ENCODE measurements at regions of chr2 and their contacts with region 1.

Region 1: DNA sequence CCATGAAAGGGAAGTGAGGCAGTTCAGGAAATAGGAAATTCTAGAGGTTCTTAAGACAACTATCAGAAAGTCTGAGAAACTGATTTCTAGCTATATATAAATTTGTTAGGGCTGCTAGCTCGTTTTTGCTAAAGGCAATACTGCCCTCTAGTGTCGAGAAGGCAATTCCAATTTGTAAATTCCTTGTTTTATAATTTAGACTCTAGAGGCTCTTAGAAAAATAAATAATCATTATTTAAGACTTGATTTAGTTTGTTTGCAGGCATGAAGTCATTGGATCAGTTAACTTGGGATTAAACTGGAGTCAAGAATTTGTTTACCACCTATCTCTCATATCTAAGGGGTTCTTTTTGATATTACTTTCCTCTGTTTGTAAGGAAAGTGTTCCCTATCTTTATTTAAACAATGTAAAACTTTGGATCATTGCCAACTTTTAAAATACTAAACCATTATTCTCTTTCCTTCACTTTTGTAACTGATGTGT is 66.2 kb downstream of the ACVR2A start:
- DNase-seq: peak; percentile 11 to 68 (median 14)
- ATAC-seq: peak; percentile 63; the same call in 2 of the 3 replicates
- H3K4me3 ChIP-seq: no peak overlapping the region
- H3K27ac ChIP-seq: no peak overlapping the region
- H3K4me1 ChIP-seq: no peaks in the 10 kb centered on the region
- H3K27me3 ChIP-seq: no peaks in the 10 kb centered on the region
- CTCF ChIP-seq: peak; percentile 44 to 83 (median 53); a peak in 4 of 6 replicates
- EP300 ChIP-seq: no peak
- POLR2A ChIP-seq: no peak
- RAD21 ChIP-seq: peak; percentile 87

Region 2: DNA sequence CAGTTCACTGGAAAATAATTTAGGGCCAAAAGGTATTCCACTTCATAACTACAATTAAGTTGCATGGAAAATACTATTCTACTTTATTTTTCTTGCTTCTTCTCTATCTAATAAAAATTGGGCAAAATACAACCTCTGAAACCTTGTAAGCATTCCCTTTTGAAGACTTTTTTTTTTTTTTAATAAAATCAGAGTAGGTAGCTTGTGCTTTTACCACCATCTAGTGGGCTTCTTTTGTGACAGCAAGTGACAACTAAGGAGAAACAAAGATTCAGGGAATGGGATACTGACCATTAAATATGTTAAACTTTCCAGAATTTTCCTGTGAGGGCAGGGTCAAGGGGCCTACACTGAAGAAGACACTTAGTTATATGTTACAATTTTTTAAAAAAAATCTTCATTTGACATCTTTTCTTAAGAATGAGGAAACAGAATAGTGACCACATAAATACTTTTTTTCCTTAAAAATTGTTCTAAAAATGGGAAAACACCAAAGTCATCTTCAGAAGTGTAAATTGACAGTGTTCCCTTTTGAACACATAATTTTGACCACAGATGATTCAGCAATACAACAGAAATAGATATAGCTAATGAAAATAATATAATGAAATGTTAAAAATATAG is 1249.4 kb before region 1 on chr2:
- CTCF ChIA-PET with region 1: no interaction called
- POLR2A ChIA-PET with region 1: no interaction called
- in situ Hi-C with region 1: no loop called
- intact Hi-C with region 1: loop called (anchors 5 kb)
- DNase-seq: peak; percentile 6 to 29 (median 6)
- ATAC-seq: no peak
- H3K4me3 ChIP-seq: no peak overlapping the region
- H3K27ac ChIP-seq: no peak overlapping the region
- H3K4me1 ChIP-seq: no peaks in the 10 kb centered on the region
- H3K27me3 ChIP-seq: no peaks in the 10 kb centered on the region
- CTCF ChIP-seq: peak; percentile 7 to 53 (median 32); a peak in 3 of 6 replicates
- EP300 ChIP-seq: no peak
- POLR2A ChIP-seq: no peak
- RAD21 ChIP-seq: peak; percentile 57 to 59

Region 3: DNA sequence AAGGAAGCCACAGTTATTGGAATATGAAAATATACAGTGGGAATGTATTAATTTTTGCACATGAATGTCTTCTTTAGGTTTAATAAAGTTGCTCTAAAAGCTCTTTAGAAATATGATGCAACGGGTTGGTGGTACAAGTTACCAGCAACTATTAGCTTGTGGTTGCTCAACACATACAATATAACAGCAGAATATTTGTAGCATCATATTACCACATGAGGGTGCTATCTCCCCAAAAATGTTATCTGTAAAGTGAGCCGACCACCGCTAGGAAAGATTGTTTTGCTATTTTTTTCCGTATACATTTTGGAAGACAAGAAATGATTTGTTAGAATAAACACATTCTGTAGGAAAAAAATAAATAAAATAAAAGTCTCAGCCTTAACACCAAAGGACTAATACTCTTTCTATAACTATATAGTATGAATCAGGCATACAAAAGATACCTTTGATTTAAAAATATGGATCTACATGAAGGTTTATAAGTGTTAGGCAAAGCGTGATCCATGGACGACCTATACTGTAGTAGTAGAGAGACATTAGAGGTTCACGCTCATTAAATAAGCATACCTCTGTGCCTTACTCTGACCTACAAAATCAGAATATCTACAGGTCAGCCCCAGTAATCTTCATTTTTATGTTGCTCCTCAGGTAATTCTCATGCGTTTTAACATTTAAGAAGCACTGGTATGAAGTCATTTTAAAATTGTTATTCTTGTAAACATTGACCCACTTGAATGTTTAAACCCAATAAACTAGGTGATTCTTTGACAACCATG is 1176.8 kb before region 1 on chr2:
- CTCF ChIA-PET with region 1: interaction called, 5 read pairs
- POLR2A ChIA-PET with region 1: no interaction called
- in situ Hi-C with region 1: loop called (anchors 25 kb)
- intact Hi-C with region 1: loop called (anchors 2 kb)
- DNase-seq: peak; percentile 7 to 16 (median 7)
- ATAC-seq: no peak
- H3K4me3 ChIP-seq: no peak overlapping the region
- H3K27ac ChIP-seq: no peak overlapping the region
- H3K4me1 ChIP-seq: no peaks in the 10 kb centered on the region
- H3K27me3 ChIP-seq: no peaks in the 10 kb centered on the region
- CTCF ChIP-seq: peak in 2 of 3 experiments; percentile 13 to 40; a peak in 2 of 6 replicates
- EP300 ChIP-seq: no peak
- POLR2A ChIP-seq: no peak
- RAD21 ChIP-seq: peak; percentile 43 to 56

Region 4: GRCh38 chr2:147045113-147045512 is 865.9 kb before region 1 on chr2:
- CTCF ChIA-PET with region 1: no interaction called
- POLR2A ChIA-PET with region 1: no interaction called
- in situ Hi-C with region 1: no loop called
- intact Hi-C with region 1: loop called (anchors 2 kb)
- DNase-seq: peak in 2 of 4 experiments; percentile 8 to 10
- ATAC-seq: no peak
- H3K4me3 ChIP-seq: no peak overlapping the region
- H3K27ac ChIP-seq: no peak overlapping the region
- H3K4me1 ChIP-seq: no peaks in the 10 kb centered on the region
- H3K27me3 ChIP-seq: no peaks in the 10 kb centered on the region
- CTCF ChIP-seq: peak in 2 of 3 experiments; percentile 31 to 38; a peak in 3 of 6 replicates
- EP300 ChIP-seq: no peak
- POLR2A ChIP-seq: no peak
- RAD21 ChIP-seq: peak in 1 of 2 experiments; percentile 34; a peak in 2 of 4 replicates

Region 5: GRCh38 chr2:147082850-147083522 is 828.0 kb before region 1 on chr2:
- CTCF ChIA-PET with region 1: no interaction called
- POLR2A ChIA-PET with region 1: no interaction called
- in situ Hi-C with region 1: loop called (anchors 25 kb)
- intact Hi-C with region 1: loop called (anchors 1 kb)
- DNase-seq: peak; percentile 21 to 50 (median 34)
- ATAC-seq: peak; percentile 53; the same call in 2 of the 3 replicates
- H3K4me3 ChIP-seq: no peak overlapping the region
- H3K27ac ChIP-seq: no peak overlapping the region
- H3K4me1 ChIP-seq: no peaks in the 10 kb centered on the region
- H3K27me3 ChIP-seq: no peaks in the 10 kb centered on the region
- CTCF ChIP-seq: peak; percentile 23 to 64 (median 47); a peak in 5 of 6 replicates
- EP300 ChIP-seq: no peak
- POLR2A ChIP-seq: no peak
- RAD21 ChIP-seq: peak; percentile 53 to 58

Region 6: DNA sequence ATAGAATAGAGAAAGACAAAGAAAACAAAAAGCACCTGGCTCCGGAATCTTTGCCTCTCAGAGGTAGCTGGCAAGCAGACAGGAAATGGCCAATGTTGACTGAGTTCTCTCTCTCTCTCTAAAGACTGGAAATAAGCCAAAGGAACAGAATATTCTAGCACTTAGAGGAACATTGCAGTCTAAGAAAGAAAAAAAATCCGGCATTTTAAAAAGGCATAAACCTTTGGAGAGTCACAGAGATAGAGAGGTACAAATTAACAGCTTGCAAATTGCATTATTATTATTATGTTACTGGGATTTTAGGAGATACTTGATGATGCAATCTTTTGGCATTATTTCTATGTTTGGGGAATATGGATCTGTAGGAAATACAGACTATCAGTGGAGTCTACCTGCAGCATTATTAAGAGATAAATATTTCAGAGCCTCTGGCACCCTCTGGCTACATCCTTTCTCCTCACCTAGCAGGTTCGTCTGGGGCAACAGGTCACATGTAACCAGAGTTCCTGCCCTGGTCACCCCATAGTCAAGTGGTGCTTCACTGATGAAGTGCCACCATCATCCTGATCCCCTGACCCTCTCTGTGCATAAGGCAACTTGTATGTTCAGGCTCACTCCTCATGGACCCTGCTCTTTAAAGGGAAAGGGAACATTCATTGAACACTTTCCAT is 385.1 kb before region 1 on chr2:
- CTCF ChIA-PET with region 1: no interaction called
- POLR2A ChIA-PET with region 1: no interaction called
- in situ Hi-C with region 1: loop called (anchors 25 kb)
- intact Hi-C with region 1: no loop called
- DNase-seq: no peak
- ATAC-seq: no peak
- H3K4me3 ChIP-seq: no peak overlapping the region
- H3K27ac ChIP-seq: no peak overlapping the region
- H3K4me1 ChIP-seq: no peaks in the 10 kb centered on the region
- H3K27me3 ChIP-seq: no peaks in the 10 kb centered on the region
- CTCF ChIP-seq: no peak
- EP300 ChIP-seq: no peak
- POLR2A ChIP-seq: no peak
- RAD21 ChIP-seq: no peak

Region 7: GRCh38 chr2:148161909-148162435 is 250.9 kb after region 1 on chr2:
- CTCF ChIA-PET with region 1: no interaction called
- POLR2A ChIA-PET with region 1: no interaction called
- in situ Hi-C with region 1: no loop called
- intact Hi-C with region 1: no loop called
- DNase-seq: peak in 2 of 4 experiments; percentile 5 to 9
- ATAC-seq: peak; percentile 72
- H3K4me3 ChIP-seq: no peak overlapping the region
- H3K27ac ChIP-seq: no peak overlapping the region
- H3K4me1 ChIP-seq: peaks cover 0 to 2% of the 10 kb centered on the region in 2 experiments; a peak in 1 of 5 replicates
- H3K27me3 ChIP-seq: no peaks in the 10 kb centered on the region
- CTCF ChIP-seq: no peak
- EP300 ChIP-seq: no peak
- POLR2A ChIP-seq: no peak
- RAD21 ChIP-seq: no peak

Measured in K562 (cell line).